ENCODE measurements at regions of chr17 and their contacts with region 1.

Region 1: GRCh38 chr17:32755045-32755805 is 121.7 kb downstream of the MYO1D start:
- H3K4me3 Mint-ChIP-seq: no peak overlapping the region
- H3K27ac Mint-ChIP-seq: no peak overlapping the region
- H3K4me1 Mint-ChIP-seq: peaks cover 8% of the 10 kb centered on the region
- H3K27me3 Mint-ChIP-seq: peaks cover 4% of the 10 kb centered on the region

Region 2: GRCh38 chr17:32461853-32462617 is 293.2 kb before region 1 on chr17:
- intact Hi-C with region 1: loop called (anchors 1 kb)
- H3K4me3 Mint-ChIP-seq: no peak overlapping the region
- H3K27ac Mint-ChIP-seq: no peak overlapping the region
- H3K4me1 Mint-ChIP-seq: peaks cover 13% of the 10 kb centered on the region
- H3K27me3 Mint-ChIP-seq: no peaks in the 10 kb centered on the region

Region 3: GRCh38 chr17:32659419-32659842 is 95.8 kb before region 1 on chr17:
- intact Hi-C with region 1: loop called (anchors 1 kb)
- H3K4me3 Mint-ChIP-seq: no peak overlapping the region
- H3K27ac Mint-ChIP-seq: no peak overlapping the region
- H3K4me1 Mint-ChIP-seq: peaks cover 4% of the 10 kb centered on the region
- H3K27me3 Mint-ChIP-seq: no peaks in the 10 kb centered on the region

Region 4: GRCh38 chr17:32701871-32702270 is 53.4 kb before region 1 on chr17:
- intact Hi-C with region 1: no loop called
- H3K4me3 Mint-ChIP-seq: no peak overlapping the region
- H3K27ac Mint-ChIP-seq: no peak overlapping the region
- H3K4me1 Mint-ChIP-seq: no peaks in the 10 kb centered on the region
- H3K27me3 Mint-ChIP-seq: no peaks in the 10 kb centered on the region

Region 5: GRCh38 chr17:32772453-32773025 is 17.3 kb after region 1 on chr17:
- intact Hi-C with region 1: no loop called
- H3K4me3 Mint-ChIP-seq: no peak overlapping the region
- H3K27ac Mint-ChIP-seq: no peak overlapping the region
- H3K4me1 Mint-ChIP-seq: no peaks in the 10 kb centered on the region
- H3K27me3 Mint-ChIP-seq: peaks cover 8% of the 10 kb centered on the region

Region 6: GRCh38 chr17:32794533-32795246 is 39.5 kb after region 1 on chr17:
- intact Hi-C with region 1: no loop called
- H3K4me3 Mint-ChIP-seq: no peak overlapping the region
- H3K27ac Mint-ChIP-seq: no peak overlapping the region
- H3K4me1 Mint-ChIP-seq: no peaks in the 10 kb centered on the region
- H3K27me3 Mint-ChIP-seq: no peaks in the 10 kb centered on the region

Measured in dendritic cell treated with granulocyte-macrophage colony-stimulating factor and Interleukin-4, amounts not matched to agents 40 ng/mL and 50 ng/mL, for 4 days (primary cell).